ENCODE measurements at regions of chr2 and their contacts with region 1.

Region 1: GRCh38 chr2:44981136-44982108 is 27.8 kb downstream of the SIX2 start:
- DNase-seq: peak; percentile 39 to 68 (median 47)
- H3K4me3 ChIP-seq: no peak overlapping the region
- H3K4me3 Mint-ChIP-seq: no peak overlapping the region
- H3K27ac ChIP-seq: no peak overlapping the region
- H3K27ac Mint-ChIP-seq: no peak overlapping the region
- H3K4me1 ChIP-seq: no peaks in the 10 kb centered on the region
- H3K4me1 Mint-ChIP-seq: peaks cover 0 to 5% (median 3%) of the 10 kb centered on the region in 3 donors
- H3K27me3 ChIP-seq: peaks cover under 1% of the 10 kb centered on the region
- H3K27me3 Mint-ChIP-seq: peaks cover 18 to 59% of the 10 kb centered on the region in 2 donors

Region 2: DNA sequence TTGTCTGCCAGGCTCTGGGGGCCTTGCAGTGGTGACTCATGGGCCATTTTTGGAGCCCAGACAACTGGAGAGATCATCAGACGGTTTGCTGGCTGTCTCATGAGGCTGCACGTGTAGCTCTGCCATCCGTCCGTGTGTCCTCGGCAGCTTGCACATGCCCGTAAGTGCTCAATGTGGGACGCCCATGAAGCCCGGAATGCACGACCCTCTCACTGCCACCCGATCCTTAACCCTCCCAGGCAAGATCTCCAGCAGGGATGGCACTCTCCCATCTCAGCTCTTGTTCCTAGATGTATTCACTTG is 10.3 kb before region 1 on chr2:
- CTCF ChIA-PET with region 1: interaction called, 13 read pairs
- POLR2A ChIA-PET with region 1: no interaction called
- DNase-seq: no peak
- H3K4me3 ChIP-seq: no peak overlapping the region
- H3K4me3 Mint-ChIP-seq: no peak overlapping the region
- H3K27ac ChIP-seq: no peak overlapping the region
- H3K27ac Mint-ChIP-seq: no peak overlapping the region
- H3K4me1 ChIP-seq: no peaks in the 10 kb centered on the region
- H3K4me1 Mint-ChIP-seq: peaks cover 0 to 9% (median 0%) of the 10 kb centered on the region in 3 donors
- H3K27me3 ChIP-seq: peaks cover 3% of the 10 kb centered on the region
- H3K27me3 Mint-ChIP-seq: peaks cover 7 to 38% of the 10 kb centered on the region in 2 donors

Region 3: DNA sequence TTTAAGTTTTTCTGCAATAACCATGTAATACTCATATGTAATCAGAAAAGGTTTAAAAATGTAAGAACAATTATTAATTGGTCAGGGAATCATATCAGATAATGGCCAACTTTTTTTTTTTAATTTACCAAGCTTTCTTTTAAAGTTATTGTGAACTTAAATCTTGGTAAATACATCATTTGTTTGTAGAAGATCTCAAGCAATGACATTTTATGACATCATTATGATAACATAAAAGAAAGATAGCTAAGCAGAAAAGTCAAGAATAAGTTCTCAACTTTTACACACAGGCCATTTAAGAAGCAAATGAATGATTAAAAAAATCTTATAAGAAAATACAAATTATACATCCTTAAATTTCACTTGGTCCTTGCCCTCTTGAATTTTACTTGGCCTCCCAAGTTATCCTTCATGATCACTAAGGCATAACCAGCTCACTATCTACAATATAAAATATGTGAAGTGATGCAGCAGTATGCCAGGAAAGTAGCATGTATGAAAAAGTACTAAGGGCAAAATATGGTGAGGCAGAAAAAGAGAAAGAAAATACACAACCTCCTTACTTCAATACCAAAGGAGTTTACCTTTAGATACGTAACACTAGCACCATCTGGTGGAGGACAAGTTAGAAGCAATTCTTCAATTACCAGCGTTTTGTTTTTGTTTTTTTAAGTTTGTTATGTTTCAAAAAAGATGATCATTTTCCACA is 513.0 kb after region 1 on chr2:
- CTCF ChIA-PET with region 1: interaction called, 26 read pairs
- POLR2A ChIA-PET with region 1: no interaction called
- DNase-seq: peak in 2 of 5 donors; percentile 17 to 32
- H3K4me3 ChIP-seq: no peak overlapping the region
- H3K4me3 Mint-ChIP-seq: no peak overlapping the region
- H3K27ac ChIP-seq: no peak overlapping the region
- H3K27ac Mint-ChIP-seq: peak overlapping the region in 3 of 8 donors; percentile 24 to 62 (median 56)
- H3K4me1 ChIP-seq: no peaks in the 10 kb centered on the region
- H3K4me1 Mint-ChIP-seq: peaks cover 4 to 13% (median 6%) of the 10 kb centered on the region in 3 donors
- H3K27me3 ChIP-seq: no peaks in the 10 kb centered on the region
- H3K27me3 Mint-ChIP-seq: no peaks in the 10 kb centered on the region

Region 4: GRCh38 chr2:45578056-45578809 is 596.8 kb after region 1 on chr2:
- CTCF ChIA-PET with region 1: interaction called, 11 read pairs
- POLR2A ChIA-PET with region 1: no interaction called
- DNase-seq: peak in 3 of 5 donors; percentile 19 to 47 (median 23)
- H3K4me3 ChIP-seq: no peak overlapping the region
- H3K4me3 Mint-ChIP-seq: no peak overlapping the region
- H3K27ac ChIP-seq: no peak overlapping the region
- H3K27ac Mint-ChIP-seq: peak overlapping the region in 2 of 8 donors; percentile 23 to 29
- H3K4me1 ChIP-seq: no peaks in the 10 kb centered on the region
- H3K4me1 Mint-ChIP-seq: peaks cover 0 to 2% (median 0%) of the 10 kb centered on the region in 3 donors
- H3K27me3 ChIP-seq: no peaks in the 10 kb centered on the region
- H3K27me3 Mint-ChIP-seq: no peaks in the 10 kb centered on the region